Activated CD8-positive, alpha-beta T cell treated with anti-CD3 and anti-CD28 coated beads, Interleukin-2, amount 10 ng/mL, durations not matched to agents 7 days and 5 days (primary cell): ENCODE measurements at regions of chr16 and their contacts with region 1.

Region 1: GRCh38 chr16:89217388-89218191 is at the start of gene ZNF778:
- DNase-seq: peak; percentile 87
- ATAC-seq: peak; percentile 86
- H3K4me3 Mint-ChIP-seq: peak within 1 kb of the TSS; percentile 84
- H3K27ac Mint-ChIP-seq: peak within 1 kb of the TSS; percentile 79
- H3K4me1 Mint-ChIP-seq: peaks cover 16% of the 10 kb centered on the region
- H3K27me3 Mint-ChIP-seq: no peaks in the 10 kb centered on the region
- total RNA-seq, gene ZNF778: 4.9 to 7.4 TPM

Region 2: GRCh38 chr16:89241187-89242007 is 23.8 kb after region 1 on chr16:
- CTCF ChIA-PET with region 1: interaction called, 9 read pairs
- POLR2A ChIA-PET with region 1: interaction called, 12 read pairs
- DNase-seq: peak; percentile 81
- ATAC-seq: peak; percentile 89
- H3K4me3 Mint-ChIP-seq: peak overlapping the region; percentile 99
- H3K27ac Mint-ChIP-seq: peak overlapping the region; percentile 100
- H3K4me1 Mint-ChIP-seq: peaks cover 22% of the 10 kb centered on the region
- H3K27me3 Mint-ChIP-seq: no peaks in the 10 kb centered on the region